ENCODE measurements at regions of chr5 and their contacts with region 1.

Region 1: DNA sequence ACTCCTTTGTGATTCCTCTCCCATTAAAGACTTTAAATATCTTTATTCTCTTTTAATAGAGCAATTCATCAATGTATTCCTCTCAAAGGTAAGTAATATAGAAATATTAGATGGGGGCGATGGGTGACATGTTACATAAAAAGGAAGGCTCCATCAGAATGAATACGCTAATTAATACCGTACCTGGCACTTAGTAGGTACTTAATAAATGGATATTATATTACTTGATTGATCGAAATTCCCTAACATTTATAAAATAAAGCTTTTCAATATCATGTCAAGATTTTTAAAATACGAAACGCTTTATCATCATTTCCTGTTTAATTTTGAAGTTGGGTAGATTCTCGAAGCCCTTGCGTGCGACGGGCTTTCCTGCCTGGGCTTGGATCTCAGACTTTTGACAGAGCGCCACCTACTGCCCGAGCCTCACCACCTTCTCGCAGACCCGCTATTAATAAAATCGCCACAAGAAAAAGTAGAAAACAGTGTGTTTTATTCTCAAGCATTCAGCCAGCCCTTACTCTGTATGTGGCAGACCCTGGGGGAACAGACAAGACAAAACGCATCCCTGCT is 99.4 kb downstream of the C5orf15 start:
- DNase-seq: peak; percentile 77

Region 2: DNA sequence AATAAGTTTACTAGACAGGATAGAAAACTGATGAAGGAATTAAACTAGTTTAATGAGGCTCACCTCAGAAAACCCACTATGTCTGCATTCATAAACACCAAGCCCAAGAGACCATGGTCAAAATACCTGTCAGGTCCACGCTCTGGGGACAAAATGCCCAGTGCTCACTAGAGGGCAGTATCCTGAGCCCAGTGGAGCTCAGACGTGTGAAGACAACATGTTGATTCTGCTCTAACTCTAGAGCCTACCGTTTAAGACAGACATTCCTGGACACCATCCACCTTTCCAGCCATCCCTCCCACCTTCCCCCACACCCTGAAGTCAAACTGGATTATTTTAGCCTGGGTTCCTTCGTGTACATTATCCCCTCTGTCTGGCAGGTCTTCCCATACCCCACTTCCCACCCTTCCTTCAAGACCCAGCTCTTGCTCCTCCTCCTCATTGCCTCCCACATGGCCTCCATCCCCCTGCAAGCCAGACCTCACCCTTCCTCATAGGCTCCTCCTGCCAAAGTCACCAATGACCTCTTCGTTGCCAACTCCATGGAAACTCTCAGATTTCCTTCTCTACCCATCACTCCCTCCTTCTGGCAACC is 114.4 kb before region 1 on chr5:
- CTCF ChIA-PET with region 1: interaction called, 10 read pairs
- POLR2A ChIA-PET with region 1: no interaction called
- DNase-seq: peak; percentile 62

Region 3: GRCh38 chr5:133794781-133795415 is 74.1 kb before region 1 on chr5:
- CTCF ChIA-PET with region 1: no interaction called
- POLR2A ChIA-PET with region 1: no interaction called
- DNase-seq: no peak

Region 4: GRCh38 chr5:133881576-133882388 is 12.8 kb after region 1 on chr5:
- CTCF ChIA-PET with region 1: interaction called, 13 read pairs
- POLR2A ChIA-PET with region 1: no interaction called
- DNase-seq: no peak